ENCODE measurements at regions of chr3 and their contacts with region 1.

Region 1: GRCh38 chr3:134794950-134795745 is at the start of gene EPHB1:
- DNase-seq: peak; percentile 78
- H3K4me3 Mint-ChIP-seq: peak within 1 kb of the TSS; percentile 80
- H3K27ac Mint-ChIP-seq: peak within 1 kb of the TSS; percentile 55
- H3K4me1 Mint-ChIP-seq: peaks cover 15% of the 10 kb centered on the region
- H3K27me3 Mint-ChIP-seq: peaks cover 53% of the 10 kb centered on the region
- total RNA-seq, gene EPHB1: 1.2 to 1.8 TPM

Region 2: DNA sequence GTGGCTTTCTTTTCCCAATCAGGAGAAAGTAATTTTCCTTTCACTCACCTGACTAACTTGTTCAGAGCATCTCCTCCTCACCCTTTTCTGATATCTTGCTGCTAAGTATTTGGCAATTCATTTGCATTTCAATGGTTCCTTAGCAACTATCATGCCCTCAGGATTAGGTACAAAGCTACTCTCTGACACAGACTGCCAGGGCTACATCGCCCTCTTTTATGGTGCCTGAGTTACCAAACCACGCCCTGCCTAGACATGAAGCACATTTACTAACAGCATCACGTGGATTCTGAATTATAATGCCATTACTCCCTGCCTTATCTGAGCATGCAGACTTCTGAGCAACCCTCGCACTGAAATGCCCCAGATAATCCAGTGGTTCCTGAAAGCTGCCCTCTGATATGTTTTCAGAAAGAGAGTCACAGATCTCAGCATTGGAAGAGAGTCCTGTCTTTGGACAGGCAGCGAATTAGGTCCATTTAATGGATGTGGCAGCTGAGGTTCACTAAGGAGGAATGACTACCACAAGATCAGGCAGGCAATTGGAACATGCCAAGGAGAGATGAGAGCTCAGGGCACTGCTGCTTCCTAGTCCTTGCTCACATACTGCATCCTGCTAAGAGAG is 14.4 kb after region 1 on chr3:
- CTCF ChIA-PET with region 1: interaction called, 14 read pairs
- POLR2A ChIA-PET with region 1: no interaction called
- DNase-seq: no peak
- H3K4me3 Mint-ChIP-seq: no peak overlapping the region
- H3K27ac Mint-ChIP-seq: no peak overlapping the region
- H3K4me1 Mint-ChIP-seq: peaks cover 3% of the 10 kb centered on the region
- H3K27me3 Mint-ChIP-seq: peaks cover 34% of the 10 kb centered on the region

Region 3: DNA sequence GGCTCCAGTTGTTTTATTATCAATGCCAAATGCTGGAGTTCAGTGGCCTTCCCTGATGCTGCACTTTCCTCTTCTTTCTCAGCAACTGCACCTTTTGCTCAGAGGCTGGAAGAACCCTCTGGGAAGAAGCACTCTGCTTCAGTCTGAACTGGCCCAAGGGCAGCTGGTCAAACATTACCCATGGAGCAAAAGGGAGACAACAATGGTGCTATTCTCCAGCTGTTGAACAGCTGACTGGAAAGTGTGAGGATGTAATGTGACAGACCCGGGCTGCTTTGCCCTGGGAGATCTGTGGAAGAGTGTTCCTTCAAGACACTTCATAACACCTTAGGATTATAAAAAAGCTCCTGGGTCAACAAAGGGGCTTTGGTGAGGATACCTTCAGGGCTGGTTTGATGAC is 84.8 kb after region 1 on chr3:
- CTCF ChIA-PET with region 1: no interaction called
- POLR2A ChIA-PET with region 1: no interaction called
- DNase-seq: no peak
- H3K4me3 Mint-ChIP-seq: no peak overlapping the region
- H3K27ac Mint-ChIP-seq: no peak overlapping the region
- H3K4me1 Mint-ChIP-seq: no peaks in the 10 kb centered on the region
- H3K27me3 Mint-ChIP-seq: peaks cover 2% of the 10 kb centered on the region